ENCODE measurements at regions of chr13 and their contacts with region 1.

Region 1: DNA sequence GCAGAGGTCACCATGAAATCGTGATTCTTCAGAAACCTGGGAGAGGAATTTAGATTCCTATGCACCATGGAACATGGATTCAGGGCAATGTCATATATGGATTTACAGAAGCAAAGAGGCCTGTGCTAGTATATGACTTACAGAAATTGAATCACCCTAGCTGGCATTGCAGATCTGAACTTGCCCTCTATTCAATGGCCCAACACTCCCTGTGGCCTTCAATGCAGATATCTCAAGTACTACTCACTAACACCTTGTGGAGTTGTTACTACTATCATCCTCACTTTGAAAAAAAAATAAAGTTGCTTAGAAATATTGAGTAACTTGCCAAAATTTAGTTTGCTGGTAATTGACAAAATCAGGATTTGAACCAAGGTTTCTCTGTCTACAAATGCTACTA is 305.4 kb upstream of the SLITRK1 start:
- DNase-seq: no peak
- H3K27ac ChIP-seq: no peak overlapping the region
- CTCF ChIP-seq: no peak

Region 2: DNA sequence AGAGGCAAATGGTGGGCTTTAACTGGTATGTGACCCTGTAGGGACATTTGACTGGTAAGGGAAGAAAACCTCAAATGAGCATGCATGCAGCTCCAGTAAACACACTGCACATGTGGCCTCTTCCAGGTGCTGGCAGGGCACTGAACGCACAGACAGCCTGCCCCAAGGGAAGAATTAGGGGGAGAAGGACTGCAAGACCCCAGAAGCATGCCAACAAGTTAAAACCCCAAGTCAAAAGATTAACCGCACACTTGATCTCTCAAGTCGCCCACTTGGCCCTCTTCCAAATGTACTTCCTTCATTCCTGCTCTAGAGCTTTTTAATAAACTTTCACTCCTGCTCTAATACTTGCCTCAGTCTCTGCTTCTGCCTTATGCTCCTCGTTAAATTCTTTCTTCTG is 258.5 kb before region 1 on chr13:
- CTCF ChIA-PET with region 1: no interaction called
- POLR2A ChIA-PET with region 1: no interaction called
- DNase-seq: no peak
- H3K27ac ChIP-seq: no peak overlapping the region
- CTCF ChIP-seq: no peak

Region 3: GRCh38 chr13:84588023-84588422 is 400.4 kb after region 1 on chr13:
- CTCF ChIA-PET with region 1: interaction called, 11 read pairs
- POLR2A ChIA-PET with region 1: no interaction called
- DNase-seq: no peak
- H3K27ac ChIP-seq: no peak overlapping the region
- CTCF ChIP-seq: no peak

Measured in RWPE1 (cell line).